Tibial artery (tissue), 4 donors: ENCODE measurements at regions of chr2 and their contacts with region 1.

Region 1: GRCh38 chr2:21317131-21317530 is 193.4 kb downstream of the TDRD15 start:
- DNase-seq: peak; percentile 61 to 71
- H3K4me3 ChIP-seq: no peak overlapping the region
- H3K27ac ChIP-seq: no peak overlapping the region
- H3K4me1 ChIP-seq: peaks cover 0 to 5% (median 0%) of the 10 kb centered on the region in 4 donors
- H3K27me3 ChIP-seq: no peaks in the 10 kb centered on the region
- CTCF ChIP-seq: peak; percentile 67 to 72

Region 2: DNA sequence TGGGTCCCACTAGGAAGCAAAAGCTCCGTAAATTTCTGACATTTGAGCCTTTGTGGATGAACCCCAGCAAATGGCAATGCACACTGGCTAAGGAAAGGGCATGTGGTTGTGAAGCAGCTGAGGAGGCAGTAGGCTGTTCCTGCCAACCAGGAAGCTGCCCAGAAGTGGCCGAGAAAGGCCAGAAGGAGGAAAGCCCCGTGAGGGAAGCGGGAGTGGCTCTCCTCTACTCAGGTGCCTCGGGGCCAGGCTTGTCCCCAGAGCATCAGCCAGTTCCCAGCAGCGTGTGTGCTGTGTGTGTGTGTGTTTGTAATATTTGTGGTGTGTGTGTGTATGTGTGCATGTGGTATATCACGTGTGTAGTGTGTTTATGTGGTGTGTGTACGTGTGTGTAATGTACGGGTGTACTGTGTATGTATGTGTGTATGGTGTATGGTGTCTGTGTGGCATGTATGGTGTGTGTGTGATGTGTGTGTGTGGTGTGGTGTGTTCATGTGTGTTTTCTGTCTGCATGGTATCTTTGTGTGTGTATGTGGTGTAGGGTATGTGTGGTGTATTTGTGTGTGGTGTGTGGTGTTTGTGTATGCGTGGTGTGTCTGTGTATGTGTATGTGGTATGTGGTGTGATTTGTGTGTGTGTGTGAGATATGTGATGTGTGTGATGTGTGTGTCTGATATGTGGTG is 363.8 kb before region 1 on chr2:
- intact Hi-C with region 1: no loop called
- DNase-seq: no peak
- H3K4me3 ChIP-seq: no peak overlapping the region
- H3K27ac ChIP-seq: no peak overlapping the region
- H3K4me1 ChIP-seq: no peaks in the 10 kb centered on the region
- H3K27me3 ChIP-seq: peaks cover 0 to 6% of the 10 kb centered on the region in 2 donors
- CTCF ChIP-seq: no peak

Region 3: GRCh38 chr2:21175895-21176646 is 141.1 kb before region 1 on chr2:
- intact Hi-C with region 1: loop called (anchors 5 kb)
- DNase-seq: no peak
- H3K4me3 ChIP-seq: peak overlapping the region in 1 of 2 donors; percentile 10
- H3K27ac ChIP-seq: no peak overlapping the region
- H3K4me1 ChIP-seq: peaks cover 0 to 8% (median 0%) of the 10 kb centered on the region in 4 donors
- H3K27me3 ChIP-seq: no peaks in the 10 kb centered on the region
- CTCF ChIP-seq: peak; percentile 39 to 60

Region 4: DNA sequence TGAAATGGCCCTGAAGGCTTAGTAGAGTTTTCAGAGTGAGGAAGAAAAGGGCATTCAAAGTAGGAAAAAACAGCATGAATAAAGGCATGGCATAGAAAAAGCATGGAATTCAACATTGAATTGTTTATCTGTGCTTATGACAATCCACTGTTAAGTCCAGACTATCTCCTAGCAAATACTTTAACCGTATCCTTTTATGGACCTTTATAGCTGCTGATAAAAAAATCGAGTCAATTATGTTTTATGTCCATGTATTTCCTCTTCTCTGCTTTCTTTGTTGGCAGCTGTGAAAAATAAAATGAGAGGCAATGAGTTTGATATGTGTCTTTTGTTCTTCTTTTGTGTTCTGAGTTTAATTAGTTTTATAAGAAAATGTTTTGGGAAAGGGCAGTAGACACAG is 123.0 kb before region 1 on chr2:
- intact Hi-C with region 1: no loop called
- DNase-seq: no peak
- H3K4me3 ChIP-seq: no peak overlapping the region
- H3K27ac ChIP-seq: no peak overlapping the region
- H3K4me1 ChIP-seq: no peaks in the 10 kb centered on the region
- H3K27me3 ChIP-seq: no peaks in the 10 kb centered on the region
- CTCF ChIP-seq: no peak

Region 5: GRCh38 chr2:21256006-21256405 is 61.1 kb before region 1 on chr2:
- intact Hi-C with region 1: no loop called
- DNase-seq: peak; percentile 65 to 67
- H3K4me3 ChIP-seq: no peak overlapping the region
- H3K27ac ChIP-seq: no peak overlapping the region
- H3K4me1 ChIP-seq: no peaks in the 10 kb centered on the region
- H3K27me3 ChIP-seq: no peaks in the 10 kb centered on the region
- CTCF ChIP-seq: no peak

Region 6: GRCh38 chr2:21431078-21431477 is 113.9 kb after region 1 on chr2:
- intact Hi-C with region 1: no loop called
- DNase-seq: no peak
- H3K4me3 ChIP-seq: no peak overlapping the region
- H3K27ac ChIP-seq: no peak overlapping the region
- H3K4me1 ChIP-seq: no peaks in the 10 kb centered on the region
- H3K27me3 ChIP-seq: no peaks in the 10 kb centered on the region
- CTCF ChIP-seq: no peak